ENCODE measurements at regions of chr6 and their contacts with region 1.

Region 1: DNA sequence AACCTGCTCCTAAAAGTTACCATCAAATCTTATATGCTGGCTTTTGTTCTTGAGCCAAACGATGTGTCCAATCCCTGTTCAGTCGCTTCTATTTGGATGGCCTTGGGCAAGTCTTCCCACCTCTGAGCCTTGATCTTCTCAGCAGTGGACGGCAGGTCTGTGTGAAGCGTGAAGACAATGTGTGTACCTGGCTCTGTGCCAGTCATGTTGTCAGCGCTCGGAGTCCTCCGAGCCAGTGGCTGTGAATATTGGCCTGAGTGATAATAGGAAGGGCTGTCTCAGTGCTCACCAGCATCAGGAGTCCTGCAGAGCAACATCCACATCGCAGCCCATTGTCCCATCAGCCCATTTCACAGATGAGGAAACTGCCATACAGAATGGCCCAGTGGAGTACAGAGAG is 219.0 kb downstream of the CDC5L start:
- DNase-seq: no peak
- H3K4me3 ChIP-seq: no peak overlapping the region
- H3K27ac ChIP-seq: no peak overlapping the region
- H3K4me1 ChIP-seq: no peaks in the 10 kb centered on the region
- H3K27me3 ChIP-seq: no peaks in the 10 kb centered on the region

Region 2: GRCh38 chr6:45115696-45116095 is 509.2 kb after region 1 on chr6:
- CTCF ChIA-PET with region 1: no interaction called
- POLR2A ChIA-PET with region 1: interaction called, 12 read pairs
- DNase-seq: peak in 2 of 3 donors; percentile 51 to 63
- H3K4me3 ChIP-seq: peak overlapping the region in 1 of 7 experiments; percentile 24
- H3K27ac ChIP-seq: no peak overlapping the region
- H3K4me1 ChIP-seq: peaks cover 0 to 10% (median 3%) of the 10 kb centered on the region in 4 experiments
- H3K27me3 ChIP-seq: no peaks in the 10 kb centered on the region